HepG2 (cell line): ENCODE measurements at regions of chr4 and their contacts with region 1.

Region 1: GRCh38 chr4:87848622-87849351 is 16.0 kb downstream of the MEPE start:
- DNase-seq: peak; percentile 47
- ATAC-seq: peak; percentile 99
- H3K4me3 ChIP-seq: peak overlapping the region in 2 of 3 experiments; percentile 36 to 46; a peak in 3 of 6 replicates
- H3K27ac ChIP-seq: no peak overlapping the region
- H3K4me1 ChIP-seq: peaks cover 27% of the 10 kb centered on the region
- H3K27me3 ChIP-seq: peaks cover 0 to 21% of the 10 kb centered on the region in 2 experiments; a peak in 2 of 5 replicates
- CTCF ChIP-seq: peak; percentile 79
- EP300 ChIP-seq: no peak
- POLR2A ChIP-seq: no peak
- RAD21 ChIP-seq: 0 out of 2 replicates have a peak, but pooled peaks have one; percentile 9

Region 2: DNA sequence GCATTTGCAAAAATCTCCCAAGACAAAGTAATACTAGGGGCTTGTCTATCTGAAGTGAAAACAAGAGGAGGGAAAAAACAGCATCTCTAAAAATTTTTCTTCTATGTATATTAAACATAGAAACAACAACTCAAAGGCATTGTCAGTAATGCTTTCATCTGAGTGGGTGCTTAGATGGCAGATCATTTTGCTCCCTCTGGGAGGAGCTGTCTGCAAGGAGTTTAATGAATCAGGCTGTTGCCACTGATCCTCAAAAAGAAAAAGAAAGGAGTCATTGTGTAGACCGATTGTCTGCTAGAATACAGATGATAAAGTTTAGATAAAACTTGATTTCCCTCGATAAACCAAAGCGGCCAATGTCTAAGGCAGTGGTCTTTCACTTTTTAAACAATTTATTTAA is 578.6 kb before region 1 on chr4:
- CTCF ChIA-PET with region 1: no interaction called
- POLR2A ChIA-PET with region 1: no interaction called
- in situ Hi-C with region 1: loop called (anchors 25 kb)
- intact Hi-C with region 1: no loop called
- DNase-seq: peak; percentile 62
- ATAC-seq: peak; percentile 93
- H3K4me3 ChIP-seq: peak overlapping the region in 1 of 3 experiments; percentile 1; a peak in 1 of 6 replicates
- H3K27ac ChIP-seq: no peak overlapping the region
- H3K4me1 ChIP-seq: peaks cover 18% of the 10 kb centered on the region
- H3K27me3 ChIP-seq: peaks cover 0 to 3% of the 10 kb centered on the region in 2 experiments; a peak in 1 of 5 replicates
- CTCF ChIP-seq: peak; percentile 82
- EP300 ChIP-seq: no peak
- POLR2A ChIP-seq: no peak
- RAD21 ChIP-seq: peak; percentile 87

Region 3: GRCh38 chr4:87543835-87544461 is 304.8 kb before region 1 on chr4:
- CTCF ChIA-PET with region 1: no interaction called
- POLR2A ChIA-PET with region 1: no interaction called
- in situ Hi-C with region 1: loop called (anchors 10 kb)
- intact Hi-C with region 1: loop called (anchors 5 kb)
- DNase-seq: peak; percentile 4
- ATAC-seq: peak; percentile 93
- H3K4me3 ChIP-seq: no peak overlapping the region
- H3K27ac ChIP-seq: no peak overlapping the region
- H3K4me1 ChIP-seq: no peaks in the 10 kb centered on the region
- H3K27me3 ChIP-seq: peaks cover 0 to 5% of the 10 kb centered on the region in 2 experiments; a peak in 2 of 5 replicates
- CTCF ChIP-seq: peak; percentile 35
- EP300 ChIP-seq: no peak
- POLR2A ChIP-seq: no peak
- RAD21 ChIP-seq: no peak

Region 4: DNA sequence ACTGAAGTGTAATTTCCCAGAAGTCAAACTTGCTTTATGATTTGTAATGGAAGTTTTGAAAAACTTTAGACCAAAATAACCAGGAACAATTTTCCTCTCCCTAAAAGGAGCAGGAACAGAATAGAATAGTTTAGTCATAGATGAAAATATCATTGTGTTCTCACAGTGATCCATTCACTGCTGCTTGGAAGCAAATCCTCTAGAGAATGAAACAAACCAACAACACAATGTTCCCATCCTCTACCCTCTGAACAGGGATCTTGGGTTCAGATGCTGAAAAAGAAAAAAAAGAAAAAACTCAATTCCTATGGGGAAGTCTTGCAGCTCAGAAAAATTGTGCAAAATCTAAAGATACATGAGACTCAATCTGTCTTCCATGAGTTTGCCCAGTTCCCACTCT is 228.3 kb before region 1 on chr4:
- CTCF ChIA-PET with region 1: no interaction called
- POLR2A ChIA-PET with region 1: no interaction called
- in situ Hi-C with region 1: no loop called
- intact Hi-C with region 1: no loop called
- DNase-seq: no peak
- ATAC-seq: no peak
- H3K4me3 ChIP-seq: no peak overlapping the region
- H3K27ac ChIP-seq: no peak overlapping the region
- H3K4me1 ChIP-seq: no peaks in the 10 kb centered on the region
- H3K27me3 ChIP-seq: no peaks in the 10 kb centered on the region
- CTCF ChIP-seq: no peak
- EP300 ChIP-seq: no peak
- POLR2A ChIP-seq: no peak
- RAD21 ChIP-seq: no peak

Region 5: DNA sequence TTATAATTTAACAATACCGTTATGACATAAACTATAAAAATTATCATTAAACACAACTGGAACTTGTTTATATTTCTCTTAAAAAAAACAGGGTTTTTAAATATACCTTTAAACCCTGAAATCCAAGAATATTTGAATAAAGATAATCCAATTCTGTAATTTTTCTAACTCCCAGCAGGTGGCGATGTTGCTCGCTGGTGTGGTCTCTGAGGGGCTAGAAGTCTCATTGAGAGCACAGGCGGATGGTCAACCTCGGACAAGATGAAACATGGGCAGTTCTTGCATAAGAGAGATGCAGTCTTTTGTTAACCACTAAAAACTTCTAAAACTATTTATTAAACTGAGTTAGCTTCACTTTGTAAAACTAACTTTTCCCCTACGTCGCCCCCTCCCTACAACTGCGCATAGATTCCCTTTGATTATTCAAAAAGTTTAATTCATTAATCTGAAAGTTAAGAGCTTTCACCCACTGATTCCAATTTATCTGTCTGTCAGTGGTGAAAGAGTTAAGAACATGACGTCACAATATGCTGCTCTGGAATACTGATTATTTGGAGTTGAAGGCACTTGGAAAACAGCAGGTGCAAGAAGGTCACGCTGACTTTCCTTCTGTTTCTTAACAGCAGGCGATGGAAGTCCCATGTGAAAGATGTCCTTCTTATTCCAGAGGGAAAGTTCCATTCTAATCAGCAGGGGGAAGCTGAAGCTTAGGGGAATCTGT is 169.2 kb before region 1 on chr4:
- CTCF ChIA-PET with region 1: interaction called, 22 read pairs
- POLR2A ChIA-PET with region 1: no interaction called
- in situ Hi-C with region 1: no loop called
- intact Hi-C with region 1: loop called (anchors 1 kb)
- DNase-seq: peak; percentile 48
- ATAC-seq: peak; percentile 63
- H3K4me3 ChIP-seq: no peak overlapping the region
- H3K27ac ChIP-seq: no peak overlapping the region
- H3K4me1 ChIP-seq: no peaks in the 10 kb centered on the region
- H3K27me3 ChIP-seq: peaks cover 0 to 7% of the 10 kb centered on the region in 2 experiments; a peak in 2 of 5 replicates
- CTCF ChIP-seq: peak; percentile 78
- EP300 ChIP-seq: no peak
- POLR2A ChIP-seq: no peak
- RAD21 ChIP-seq: peak; percentile 48; the same call in 1 of the 2 replicates

Region 6: GRCh38 chr4:87882321-87882720 is 33.5 kb after region 1 on chr4:
- CTCF ChIA-PET with region 1: no interaction called
- POLR2A ChIA-PET with region 1: no interaction called
- in situ Hi-C with region 1: no loop called
- intact Hi-C with region 1: no loop called
- DNase-seq: no peak
- ATAC-seq: no peak
- H3K4me3 ChIP-seq: no peak overlapping the region
- H3K27ac ChIP-seq: no peak overlapping the region
- H3K4me1 ChIP-seq: peaks cover 23% of the 10 kb centered on the region
- H3K27me3 ChIP-seq: no peaks in the 10 kb centered on the region
- CTCF ChIP-seq: no peak
- EP300 ChIP-seq: no peak
- POLR2A ChIP-seq: no peak
- RAD21 ChIP-seq: no peak

Region 7: GRCh38 chr4:87973283-87974169 is 124.7 kb after region 1 on chr4:
- CTCF ChIA-PET with region 1: interaction called, 67 read pairs
- POLR2A ChIA-PET with region 1: interaction called, 4 read pairs
- in situ Hi-C with region 1: no loop called
- intact Hi-C with region 1: loop called (anchors 1 kb)
- DNase-seq: peak; percentile 63
- ATAC-seq: peak; percentile 77
- H3K4me3 ChIP-seq: peak overlapping the region in 2 of 3 experiments; percentile 24 to 26; a peak in 2 of 6 replicates
- H3K27ac ChIP-seq: no peak overlapping the region
- H3K4me1 ChIP-seq: peaks cover 64% of the 10 kb centered on the region
- H3K27me3 ChIP-seq: no peaks in the 10 kb centered on the region
- CTCF ChIP-seq: peak; percentile 79
- EP300 ChIP-seq: no peak
- POLR2A ChIP-seq: no peak
- RAD21 ChIP-seq: peak; percentile 73

Region 8: GRCh38 chr4:87985097-87985886 is 136.5 kb after region 1 on chr4:
- CTCF ChIA-PET with region 1: interaction called, 18 read pairs
- POLR2A ChIA-PET with region 1: interaction called, 3 read pairs
- in situ Hi-C with region 1: no loop called
- intact Hi-C with region 1: loop called (anchors 1 kb)
- DNase-seq: peak; percentile 70
- ATAC-seq: peak; percentile 100
- H3K4me3 ChIP-seq: no peak overlapping the region
- H3K27ac ChIP-seq: no peak overlapping the region
- H3K4me1 ChIP-seq: peaks cover 8% of the 10 kb centered on the region
- H3K27me3 ChIP-seq: peaks cover 0 to 5% of the 10 kb centered on the region in 2 experiments; a peak in 2 of 5 replicates
- CTCF ChIP-seq: peak; percentile 99
- EP300 ChIP-seq: no peak
- POLR2A ChIP-seq: no peak
- RAD21 ChIP-seq: peak; percentile 78

Region 9: GRCh38 chr4:88033309-88033708 is 184.5 kb after region 1 on chr4:
- CTCF ChIA-PET with region 1: no interaction called
- POLR2A ChIA-PET with region 1: no interaction called
- in situ Hi-C with region 1: no loop called
- intact Hi-C with region 1: loop called (anchors 1 kb)
- DNase-seq: peak; percentile 71
- ATAC-seq: peak; percentile 61
- H3K4me3 ChIP-seq: no peak overlapping the region
- H3K27ac ChIP-seq: no peak overlapping the region
- H3K4me1 ChIP-seq: no peaks in the 10 kb centered on the region
- H3K27me3 ChIP-seq: no peaks in the 10 kb centered on the region
- CTCF ChIP-seq: peak; percentile 73
- EP300 ChIP-seq: no peak
- POLR2A ChIP-seq: no peak
- RAD21 ChIP-seq: peak; percentile 69; the same call in 1 of the 2 replicates